ENCODE measurements at regions of chr5 and their contacts with region 1.

Region 1: GRCh38 chr5:134708301-134708700 is 30.0 kb upstream of the CAMLG start:
- DNase-seq: no peak
- ATAC-seq: no peak
- H3K4me3 ChIP-seq: no peak overlapping the region
- H3K4me3 Mint-ChIP-seq: no peak overlapping the region
- H3K27ac ChIP-seq: no peak overlapping the region
- H3K27ac Mint-ChIP-seq: no peak overlapping the region
- H3K4me1 ChIP-seq: no peaks in the 10 kb centered on the region
- H3K4me1 Mint-ChIP-seq: no peaks in the 10 kb centered on the region
- H3K27me3 ChIP-seq: no peaks in the 10 kb centered on the region
- H3K27me3 Mint-ChIP-seq: no peaks in the 10 kb centered on the region
- CTCF ChIP-seq: no peak

Region 2: GRCh38 chr5:133199417-133200178 is 1508.7 kb before region 1 on chr5:
- CTCF ChIA-PET with region 1: no interaction called
- POLR2A ChIA-PET with region 1: no interaction called
- intact Hi-C with region 1: loop called in 1 of 2 experiments (anchors 10 kb)
- DNase-seq: no peak
- ATAC-seq: no peak
- H3K4me3 ChIP-seq: no peak overlapping the region
- H3K4me3 Mint-ChIP-seq: no peak overlapping the region
- H3K27ac ChIP-seq: no peak overlapping the region
- H3K27ac Mint-ChIP-seq: no peak overlapping the region
- H3K4me1 ChIP-seq: no peaks in the 10 kb centered on the region
- H3K4me1 Mint-ChIP-seq: no peaks in the 10 kb centered on the region
- H3K27me3 ChIP-seq: no peaks in the 10 kb centered on the region
- H3K27me3 Mint-ChIP-seq: no peaks in the 10 kb centered on the region
- CTCF ChIP-seq: no peak

Region 3: GRCh38 chr5:134249469-134250379 is 458.6 kb before region 1 on chr5:
- CTCF ChIA-PET with region 1: no interaction called
- POLR2A ChIA-PET with region 1: no interaction called
- intact Hi-C with region 1: no loop called
- DNase-seq: peak in 1 of 9 experiments; percentile 35
- ATAC-seq: no peak
- H3K4me3 ChIP-seq: no peak overlapping the region
- H3K4me3 Mint-ChIP-seq: no peak overlapping the region
- H3K27ac ChIP-seq: no peak overlapping the region
- H3K27ac Mint-ChIP-seq: no peak overlapping the region
- H3K4me1 ChIP-seq: no peaks in the 10 kb centered on the region
- H3K4me1 Mint-ChIP-seq: no peaks in the 10 kb centered on the region
- H3K27me3 ChIP-seq: peaks cover 0 to 3% of the 10 kb centered on the region in 2 experiments
- H3K27me3 Mint-ChIP-seq: peaks cover 5% of the 10 kb centered on the region
- CTCF ChIP-seq: no peak

Measured in CD8-positive, alpha-beta T cell (primary cell).